GM23248 (cell line): ENCODE measurements at regions of chr6 and their contacts with region 1.

Region 1: DNA sequence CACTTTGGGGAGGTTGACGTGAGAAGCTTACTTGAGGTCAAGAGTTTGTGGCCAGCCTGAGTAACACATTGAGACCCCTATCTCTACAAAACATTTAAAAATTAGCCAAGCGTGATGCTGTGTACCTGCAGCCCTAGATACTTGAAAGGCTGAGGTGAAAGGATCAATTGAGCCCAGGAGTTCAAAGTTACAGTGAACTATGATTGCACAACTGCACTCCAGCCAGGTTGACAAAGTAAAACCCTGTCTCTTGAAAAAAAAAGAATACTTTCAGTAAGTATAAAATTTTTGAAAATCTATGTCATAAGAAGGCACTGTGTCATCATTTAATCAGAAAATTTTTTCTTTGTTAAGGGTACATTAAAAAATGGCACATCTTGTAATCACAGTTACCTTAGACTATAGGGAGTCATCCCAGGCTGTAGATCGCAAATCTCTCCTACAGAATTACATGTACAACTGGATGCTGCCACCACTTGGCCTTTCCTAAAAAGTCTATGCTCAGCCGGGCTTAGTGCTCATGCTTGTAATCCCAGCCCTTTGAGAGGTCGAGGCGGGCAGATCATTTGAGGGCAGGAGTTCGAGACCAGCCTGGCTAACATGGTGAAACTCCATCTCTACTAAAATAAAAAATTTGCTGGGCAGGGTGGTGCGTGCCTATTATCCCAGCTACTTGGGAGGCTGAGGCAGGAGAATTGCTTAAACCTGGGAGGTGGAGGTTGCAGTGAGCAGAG is 17.0 kb upstream of the MRS2 start:
- DNase-seq: no peak
- H3K4me3 ChIP-seq: no peak overlapping the region
- H3K27ac ChIP-seq: no peak overlapping the region
- H3K4me1 ChIP-seq: no peaks in the 10 kb centered on the region
- H3K27me3 ChIP-seq: no peaks in the 10 kb centered on the region

Region 2: DNA sequence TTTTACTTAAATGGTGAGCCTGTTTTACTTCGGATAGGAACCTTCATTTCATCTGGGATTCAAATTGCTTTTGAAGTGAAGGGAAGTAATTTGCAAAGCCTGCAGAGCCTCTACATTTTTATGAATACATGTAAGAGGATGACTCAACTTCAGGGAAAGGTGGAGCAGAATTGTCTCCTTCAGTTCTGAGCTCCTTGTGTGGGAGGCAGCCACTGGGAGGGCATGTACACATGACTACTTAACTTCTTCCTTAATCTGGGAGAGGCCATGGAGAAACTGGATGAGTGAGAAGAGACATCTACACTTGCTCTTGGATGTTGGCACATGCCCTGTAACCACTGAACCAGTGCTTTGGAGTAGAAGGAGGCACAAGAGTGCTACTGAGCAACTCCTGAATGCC is 404.7 kb before region 1 on chr6:
- in situ Hi-C with region 1: no loop called
- DNase-seq: peak; percentile 58
- H3K4me3 ChIP-seq: no peak overlapping the region
- H3K27ac ChIP-seq: no peak overlapping the region
- H3K4me1 ChIP-seq: no peaks in the 10 kb centered on the region
- H3K27me3 ChIP-seq: no peaks in the 10 kb centered on the region

Region 3: DNA sequence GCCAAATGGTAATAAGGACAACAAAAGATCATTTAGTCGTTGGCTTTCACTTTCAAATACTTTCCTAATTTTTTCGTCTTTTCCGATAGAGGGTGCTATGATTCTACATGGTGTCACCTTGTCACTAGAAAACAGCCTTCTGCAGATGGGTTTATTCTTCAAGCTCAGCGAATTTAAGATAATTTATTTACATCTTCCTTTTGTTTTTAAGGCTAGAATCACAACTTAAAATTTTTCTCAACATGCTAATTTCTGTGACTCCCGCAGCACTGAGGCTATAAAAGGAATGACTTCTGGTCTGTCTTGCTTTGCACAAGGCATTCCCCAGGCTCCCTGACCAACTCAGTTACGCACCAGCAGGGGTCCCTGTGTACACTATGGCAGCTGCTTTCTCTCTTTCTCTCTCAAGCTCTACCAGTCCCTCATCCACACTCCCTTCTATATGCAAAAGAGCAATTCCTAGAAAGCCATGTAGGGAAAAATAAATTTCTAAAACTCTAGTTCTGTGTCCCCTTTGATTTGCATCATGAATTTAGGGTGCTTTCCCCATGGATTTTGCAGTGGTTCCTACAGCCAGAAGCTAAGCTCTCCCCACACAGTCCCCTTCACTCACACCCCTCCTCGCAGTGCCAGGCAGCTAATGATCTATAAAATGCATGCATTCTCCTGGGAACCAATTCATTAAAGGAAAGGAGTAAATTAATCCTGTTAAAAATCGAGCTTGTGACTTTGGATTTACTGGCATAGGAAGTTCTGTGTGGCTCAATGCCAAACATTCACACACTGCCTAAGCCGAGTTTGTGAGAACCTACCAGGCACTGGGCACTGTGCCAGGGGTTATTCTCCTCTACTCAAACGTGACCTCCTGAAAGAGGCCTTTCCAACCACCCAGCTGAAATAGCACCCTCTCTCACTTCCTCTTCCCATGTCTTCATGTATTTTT is 102.4 kb before region 1 on chr6:
- in situ Hi-C with region 1: loop called (anchors 10 kb)
- DNase-seq: peak; percentile 86
- H3K4me3 ChIP-seq: peak overlapping the region; percentile 56
- H3K27ac ChIP-seq: no peak overlapping the region
- H3K4me1 ChIP-seq: no peaks in the 10 kb centered on the region
- H3K27me3 ChIP-seq: no peaks in the 10 kb centered on the region